Psoas muscle (tissue), 8 donors: ENCODE measurements at regions of chr7 and their contacts with region 1.

Region 1: DNA sequence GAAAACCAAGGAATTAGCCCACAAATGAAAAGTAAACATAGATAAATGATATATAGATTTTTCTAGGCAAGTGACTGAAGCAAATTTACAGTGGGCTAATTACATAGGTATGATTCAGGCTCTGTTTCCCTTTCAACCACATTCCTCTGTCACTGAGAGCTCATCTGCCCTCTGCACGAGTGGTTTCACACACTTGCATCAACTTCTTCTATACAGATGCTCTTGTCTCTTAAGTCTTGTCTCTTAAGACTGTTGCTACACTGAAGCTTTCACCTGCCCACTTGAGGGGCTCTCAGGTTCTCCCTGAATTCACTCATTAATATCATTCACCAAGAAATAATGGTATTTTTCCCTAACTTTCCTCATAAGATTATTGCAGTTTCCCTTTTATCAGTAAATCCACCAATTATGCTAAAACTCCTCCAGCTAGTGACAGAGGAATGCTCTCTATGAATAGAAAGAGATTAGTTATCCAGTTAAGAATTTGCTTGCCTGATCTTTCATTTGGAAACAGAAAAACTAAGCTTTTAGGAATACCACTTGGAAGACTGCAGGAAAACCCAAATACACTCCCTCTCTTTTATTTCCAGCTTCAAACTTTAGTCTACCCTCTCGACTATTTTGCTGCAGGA is 95.7 kb downstream of the ELAPOR2 start:
- DNase-seq: no peak
- ATAC-seq: peak in 2 of 4 donors; percentile 51 to 54
- H3K4me3 ChIP-seq: no peak overlapping the region
- H3K27ac ChIP-seq: peak overlapping the region; percentile 68
- H3K4me1 ChIP-seq: peaks cover 16% of the 10 kb centered on the region
- H3K27me3 ChIP-seq: no peaks in the 10 kb centered on the region
- CTCF ChIP-seq: no peak

Region 2: GRCh38 chr7:86995052-86995725 is 31.5 kb after region 1 on chr7:
- intact Hi-C with region 1: loop called in 1 of 2 experiments (anchors 5 kb)
- DNase-seq: no peak
- ATAC-seq: peak in 2 of 4 donors; percentile 49 to 56
- H3K4me3 ChIP-seq: no peak overlapping the region
- H3K27ac ChIP-seq: peak overlapping the region; percentile 56
- H3K4me1 ChIP-seq: peaks cover 10% of the 10 kb centered on the region
- H3K27me3 ChIP-seq: no peaks in the 10 kb centered on the region
- CTCF ChIP-seq: no peak